Posterior vena cava (tissue), 2 donors: ENCODE measurements at regions of chr3 and their contacts with region 1.

Region 1: DNA sequence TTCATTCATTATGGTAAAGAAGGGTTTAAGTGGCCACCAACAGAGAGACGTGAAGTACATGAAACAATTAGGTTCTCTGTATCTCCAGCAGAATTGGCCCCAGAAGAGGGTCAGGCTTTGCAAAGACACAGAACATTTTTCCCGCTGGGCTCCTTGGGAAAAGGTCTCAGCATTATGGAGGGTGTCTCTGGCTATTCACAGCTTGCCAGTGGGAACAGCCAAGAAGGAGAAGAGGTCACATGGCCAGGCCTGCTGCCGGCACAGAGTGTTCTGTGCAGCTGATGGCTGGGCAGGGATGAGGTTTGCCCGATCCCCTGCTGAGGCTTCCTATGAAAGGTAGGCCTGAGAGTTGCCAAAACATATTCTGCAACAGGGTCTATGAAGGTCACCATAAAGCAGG is 77.8 kb upstream of the LPP start:
- DNase-seq: no peak

Region 2: GRCh38 chr3:188111002-188111584 is 34.9 kb after region 1 on chr3:
- intact Hi-C with region 1: loop called (anchors 5 kb)
- DNase-seq: no peak

Region 3: GRCh38 chr3:188119846-188120245 is 43.7 kb after region 1 on chr3:
- intact Hi-C with region 1: loop called in 1 of 2 experiments (anchors 5 kb)
- DNase-seq: no peak